MCF 10A (cell line): ENCODE measurements at regions of chr1 and their contacts with region 1.

Region 1: DNA sequence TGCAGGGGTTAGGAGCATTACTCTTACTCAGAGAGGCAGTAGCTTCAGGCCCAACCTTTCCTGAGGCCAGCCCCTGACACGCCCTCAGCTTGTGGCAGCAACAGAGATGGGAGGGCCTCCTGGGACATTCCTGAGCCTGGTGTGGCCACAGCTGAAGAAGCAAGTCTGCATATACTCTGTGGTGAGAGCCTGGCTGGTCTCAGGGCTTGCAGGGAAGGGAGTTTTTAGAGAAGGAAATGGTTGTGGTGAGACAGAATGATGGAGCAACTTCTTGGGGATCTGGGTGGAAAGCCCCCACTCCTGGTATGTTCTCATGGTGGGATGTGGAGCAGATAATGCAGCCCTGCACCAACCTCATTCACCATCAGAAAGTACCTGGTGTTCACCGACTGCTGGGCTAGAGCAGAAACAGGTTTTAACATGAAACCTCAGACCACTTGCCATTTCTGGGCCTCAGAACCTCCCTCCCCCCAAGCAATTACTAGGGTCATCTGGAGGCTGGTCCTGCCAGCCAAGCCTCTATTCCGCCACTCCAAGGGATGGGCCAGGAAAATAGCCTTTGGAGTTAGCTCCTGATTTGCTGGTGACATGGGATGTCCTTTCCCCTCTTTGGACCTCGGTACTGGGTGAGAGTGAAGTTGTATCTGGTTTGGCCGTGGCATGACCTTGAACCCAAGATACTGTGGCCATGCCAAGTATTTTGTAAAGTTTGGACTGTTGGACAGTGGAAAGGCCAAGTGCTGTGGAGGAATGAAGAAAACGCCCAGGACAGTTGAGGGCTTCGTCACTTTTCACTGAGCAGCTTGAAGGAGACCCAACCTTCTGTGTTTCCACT is 28.1 kb upstream of the RNF19B start:
- DNase-seq: peak; percentile 94
- H3K4me3 Mint-ChIP-seq: peak overlapping the region; percentile 48
- H3K27ac Mint-ChIP-seq: peak overlapping the region; percentile 92
- H3K4me1 Mint-ChIP-seq: peaks cover 42% of the 10 kb centered on the region
- H3K27me3 Mint-ChIP-seq: no peaks in the 10 kb centered on the region
- CTCF ChIP-seq: no peak

Region 2: GRCh38 chr1:32939655-32940371 is 52.9 kb before region 1 on chr1:
- CTCF ChIA-PET with region 1: interaction called, 7 read pairs
- POLR2A ChIA-PET with region 1: interaction called, 11 read pairs
- intact Hi-C with region 1: no loop called
- DNase-seq: peak; percentile 83
- H3K4me3 Mint-ChIP-seq: no peak overlapping the region
- H3K27ac Mint-ChIP-seq: peak overlapping the region; percentile 81
- H3K4me1 Mint-ChIP-seq: peaks cover 9% of the 10 kb centered on the region
- H3K27me3 Mint-ChIP-seq: no peaks in the 10 kb centered on the region
- CTCF ChIP-seq: no peak

Region 3: DNA sequence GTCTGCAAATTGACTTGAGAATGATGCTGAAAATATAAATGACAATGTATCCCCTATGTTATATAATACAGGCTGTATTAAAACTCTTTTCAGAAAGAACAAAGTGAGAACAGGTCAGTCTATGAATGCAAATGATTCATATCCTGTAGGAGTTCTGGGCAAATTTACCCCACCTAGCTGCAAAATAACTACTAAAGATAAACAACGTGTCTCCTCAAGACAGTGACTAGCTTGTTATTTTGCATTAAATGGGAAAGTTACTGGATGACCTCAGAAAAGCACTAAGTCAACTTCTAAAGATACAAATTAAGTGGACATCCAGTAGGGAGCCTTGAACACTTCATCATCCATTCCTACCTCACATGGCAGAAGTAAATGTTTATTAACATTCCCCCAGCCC is 39.2 kb before region 1 on chr1:
- CTCF ChIA-PET with region 1: interaction called, 4 read pairs
- POLR2A ChIA-PET with region 1: interaction called, 255 read pairs
- intact Hi-C with region 1: loop called (anchors 2 kb)
- DNase-seq: peak; percentile 70
- H3K4me3 Mint-ChIP-seq: no peak overlapping the region
- H3K27ac Mint-ChIP-seq: peak overlapping the region; percentile 87
- H3K4me1 Mint-ChIP-seq: peaks cover 14% of the 10 kb centered on the region
- H3K27me3 Mint-ChIP-seq: no peaks in the 10 kb centered on the region
- CTCF ChIP-seq: no peak

Region 4: GRCh38 chr1:32964461-32965250 is 28.1 kb before region 1 on chr1 and contains the start of gene RNF19B:
- CTCF ChIA-PET with region 1: interaction called, 4 read pairs
- POLR2A ChIA-PET with region 1: interaction called, 255 read pairs
- intact Hi-C with region 1: loop called (anchors 1 kb)
- DNase-seq: peak; percentile 95
- H3K4me3 Mint-ChIP-seq: peak within 1 kb of the TSS; percentile 84
- H3K27ac Mint-ChIP-seq: peak within 1 kb of the TSS; percentile 69
- H3K4me1 Mint-ChIP-seq: peaks cover 29% of the 10 kb centered on the region
- H3K27me3 Mint-ChIP-seq: no peaks in the 10 kb centered on the region
- CTCF ChIP-seq: no peak
- total RNA-seq, gene RNF19B: 38.0 and 41.3 TPM in 2 replicates

Region 5: DNA sequence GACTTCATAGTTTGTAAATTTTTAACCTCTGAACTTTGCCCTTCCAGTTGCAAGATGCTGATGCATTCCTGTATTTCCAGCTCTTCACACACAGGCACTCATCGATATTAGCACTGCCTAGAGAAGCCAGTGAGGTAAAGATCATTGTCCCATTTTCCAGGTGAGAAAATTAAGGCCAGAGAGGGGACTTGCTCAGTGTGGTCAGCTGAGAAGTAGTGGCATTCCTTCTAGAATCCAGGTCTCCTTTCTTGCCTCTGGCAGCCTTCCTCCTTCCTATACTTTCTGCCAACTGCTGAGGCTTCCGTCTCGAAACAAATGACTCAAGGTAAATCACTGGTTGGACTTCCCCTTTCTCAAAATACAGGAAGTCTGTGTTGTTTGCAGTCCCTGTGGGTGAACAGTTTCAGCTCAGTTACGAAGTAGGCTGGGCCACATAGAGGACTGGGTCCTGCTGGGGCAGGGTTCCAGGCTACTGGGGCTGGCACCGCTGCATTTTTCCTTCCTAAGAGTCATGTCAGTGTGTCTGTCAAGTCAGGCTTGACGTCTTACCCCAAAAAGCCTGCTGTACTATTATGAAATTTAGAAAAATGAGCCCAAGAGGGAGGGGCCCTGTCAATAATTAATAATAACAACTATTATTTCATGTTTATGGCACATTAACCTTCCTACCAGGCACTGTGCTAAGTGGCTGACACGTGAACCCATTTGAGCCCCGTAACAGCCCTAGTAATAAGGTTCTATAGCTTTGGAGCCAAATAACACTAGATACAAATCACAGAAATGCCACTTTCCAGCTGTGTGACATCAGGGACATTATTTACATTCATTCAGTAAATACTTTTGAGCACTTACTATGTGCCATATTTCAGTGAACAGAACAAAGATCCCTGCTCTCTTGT is 11.5 kb before region 1 on chr1:
- CTCF ChIA-PET with region 1: interaction called, 3 read pairs
- POLR2A ChIA-PET with region 1: interaction called, 49 read pairs
- intact Hi-C with region 1: no loop called
- DNase-seq: peak; percentile 95
- H3K4me3 Mint-ChIP-seq: peak overlapping the region; percentile 6
- H3K27ac Mint-ChIP-seq: peak overlapping the region; percentile 95
- H3K4me1 Mint-ChIP-seq: peaks cover 14% of the 10 kb centered on the region
- H3K27me3 Mint-ChIP-seq: no peaks in the 10 kb centered on the region
- CTCF ChIP-seq: no peak